Heart right ventricle (tissue), 16 donors: ENCODE measurements at regions of chr19 and their contacts with region 1.

Region 1: DNA sequence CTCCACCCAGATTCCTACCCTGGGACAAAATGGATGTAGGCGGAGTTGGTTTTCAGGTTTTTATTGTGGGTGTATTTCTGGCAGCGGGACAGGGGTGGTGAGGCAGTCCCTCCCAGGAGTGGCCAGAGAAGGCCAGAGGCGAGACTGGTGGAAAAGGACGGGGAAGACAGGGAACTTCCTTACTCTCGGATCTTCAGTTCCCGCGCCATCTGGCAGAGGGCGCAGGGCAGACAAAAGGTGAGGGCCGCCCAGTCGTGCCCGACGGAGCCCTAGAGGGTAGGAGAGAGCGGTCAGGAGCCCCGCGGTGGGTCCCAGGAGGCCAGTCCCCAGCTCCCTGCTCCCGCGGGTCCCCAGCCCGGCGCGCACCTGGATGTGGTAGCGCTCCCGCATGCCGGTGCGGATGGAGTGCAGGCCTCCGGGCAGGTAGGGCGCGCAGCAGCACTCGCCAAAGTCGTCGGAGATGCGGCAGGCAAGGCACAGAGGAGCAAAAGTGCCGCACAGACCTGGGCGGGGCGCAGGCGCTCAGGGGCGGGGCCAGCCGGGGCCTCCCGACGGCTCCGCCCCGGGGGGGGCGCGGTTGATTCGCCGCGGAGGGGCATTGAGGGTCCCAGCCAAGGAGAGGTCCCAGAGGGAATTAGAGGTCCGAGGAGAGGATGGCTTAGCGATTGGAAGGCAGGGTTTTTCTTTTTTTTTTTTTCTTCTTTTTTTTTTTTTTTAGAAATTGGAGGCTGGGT is 3.0 kb downstream of the CNFN start:
- DNase-seq: peak; percentile 55 to 67
- ATAC-seq: peak; percentile 59 to 81 (median 76)
- H3K4me3 ChIP-seq: peak overlapping the region in 9 of 10 donors; percentile 28 to 60 (median 51)
- H3K27ac ChIP-seq: peak overlapping the region in 3 of 10 donors; percentile 28 to 50 (median 38)
- H3K4me1 ChIP-seq: peaks cover 0 to 12% (median 8%) of the 10 kb centered on the region in 9 donors
- H3K27me3 ChIP-seq: peaks cover 0 to 59% (median 27%) of the 10 kb centered on the region in 7 donors
- CTCF ChIP-seq: peak; percentile 10 to 69 (median 54)

Region 2: GRCh38 chr19:42433503-42434260 is 46.5 kb after region 1 on chr19:
- intact Hi-C with region 1: loop called in 1 of 10 experiments (anchors 5 kb)
- DNase-seq: peak; percentile 86 to 92
- ATAC-seq: peak; percentile 89 to 95 (median 92)
- H3K4me3 ChIP-seq: peak overlapping the region in 1 of 10 donors; percentile 11
- H3K27ac ChIP-seq: peak overlapping the region; percentile 46 to 89 (median 62)
- H3K4me1 ChIP-seq: peaks cover 6 to 50% (median 20%) of the 10 kb centered on the region in 9 donors
- H3K27me3 ChIP-seq: no peaks in the 10 kb centered on the region
- CTCF ChIP-seq: peak; percentile 49 to 84 (median 77)